ENCODE measurements at regions of chr22 and their contacts with region 1.

Region 1: DNA sequence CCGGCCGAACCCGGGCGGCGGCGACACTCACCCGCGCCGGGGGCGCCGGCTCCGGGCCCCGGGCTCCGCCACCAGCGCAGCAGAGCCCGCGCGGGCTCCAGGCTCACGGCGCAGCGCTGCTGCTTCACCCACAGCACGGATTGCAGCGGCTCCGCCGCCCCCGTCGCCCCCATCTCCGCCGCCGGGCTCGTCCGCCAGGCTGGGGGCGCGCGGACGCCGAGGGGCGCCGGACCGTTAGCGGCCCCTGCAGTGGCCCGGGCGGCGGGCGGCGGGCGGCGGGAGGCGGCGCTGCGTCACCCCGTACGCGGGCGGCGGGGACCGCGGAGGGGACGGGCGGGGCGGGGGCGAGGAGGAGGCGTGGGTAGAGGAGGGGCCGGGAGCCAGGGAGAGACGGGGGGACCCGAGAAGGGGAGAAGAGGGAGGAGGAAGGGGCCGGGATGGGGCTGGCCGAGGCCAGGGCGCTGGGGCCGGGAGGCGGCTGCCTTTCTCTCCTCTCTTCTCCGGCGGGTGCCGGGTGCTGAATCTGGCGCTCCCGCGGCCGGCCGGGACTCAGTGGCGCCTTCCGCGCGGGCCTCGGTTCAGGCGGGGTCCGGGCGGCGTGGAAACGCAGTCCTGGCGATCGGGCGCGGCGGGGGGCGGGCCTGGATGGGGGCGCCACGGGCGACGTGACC is at the start of gene CERK:
- DNase-seq: peak; percentile 58
- H3K4me3 ChIP-seq: peak within 1 kb of the TSS; percentile 77
- H3K27ac ChIP-seq: peak within 1 kb of the TSS; percentile 56
- H3K4me1 ChIP-seq: peaks cover 46% of the 10 kb centered on the region
- CTCF ChIP-seq: no peak
- total RNA-seq, gene CERK: 47.9 and 48.1 TPM in 2 replicates

Region 2: GRCh38 chr22:46592390-46592872 is 145.7 kb before region 1 on chr22:
- CTCF ChIA-PET with region 1: no interaction called
- POLR2A ChIA-PET with region 1: no interaction called
- intact Hi-C with region 1: loop called (anchors 5 kb)
- DNase-seq: peak; percentile 82
- H3K4me3 ChIP-seq: peak overlapping the region; percentile 49
- H3K27ac ChIP-seq: peak overlapping the region; percentile 87
- H3K4me1 ChIP-seq: peaks cover 65% of the 10 kb centered on the region
- CTCF ChIP-seq: no peak

Region 3: GRCh38 chr22:46613606-46614021 is 124.5 kb before region 1 on chr22:
- CTCF ChIA-PET with region 1: no interaction called
- POLR2A ChIA-PET with region 1: no interaction called
- intact Hi-C with region 1: loop called (anchors 2 kb)
- DNase-seq: peak; percentile 78
- H3K4me3 ChIP-seq: peak overlapping the region; percentile 71
- H3K27ac ChIP-seq: peak overlapping the region; percentile 82
- H3K4me1 ChIP-seq: peaks cover 28% of the 10 kb centered on the region
- CTCF ChIP-seq: no peak

Region 4: GRCh38 chr22:46681010-46681409 is 57.1 kb before region 1 on chr22:
- CTCF ChIA-PET with region 1: no interaction called
- POLR2A ChIA-PET with region 1: no interaction called
- intact Hi-C with region 1: loop called (anchors 5 kb)
- DNase-seq: peak; percentile 40
- H3K4me3 ChIP-seq: no peak overlapping the region
- H3K27ac ChIP-seq: no peak overlapping the region
- H3K4me1 ChIP-seq: peaks cover 32% of the 10 kb centered on the region
- CTCF ChIP-seq: peak; percentile 69

Region 5: DNA sequence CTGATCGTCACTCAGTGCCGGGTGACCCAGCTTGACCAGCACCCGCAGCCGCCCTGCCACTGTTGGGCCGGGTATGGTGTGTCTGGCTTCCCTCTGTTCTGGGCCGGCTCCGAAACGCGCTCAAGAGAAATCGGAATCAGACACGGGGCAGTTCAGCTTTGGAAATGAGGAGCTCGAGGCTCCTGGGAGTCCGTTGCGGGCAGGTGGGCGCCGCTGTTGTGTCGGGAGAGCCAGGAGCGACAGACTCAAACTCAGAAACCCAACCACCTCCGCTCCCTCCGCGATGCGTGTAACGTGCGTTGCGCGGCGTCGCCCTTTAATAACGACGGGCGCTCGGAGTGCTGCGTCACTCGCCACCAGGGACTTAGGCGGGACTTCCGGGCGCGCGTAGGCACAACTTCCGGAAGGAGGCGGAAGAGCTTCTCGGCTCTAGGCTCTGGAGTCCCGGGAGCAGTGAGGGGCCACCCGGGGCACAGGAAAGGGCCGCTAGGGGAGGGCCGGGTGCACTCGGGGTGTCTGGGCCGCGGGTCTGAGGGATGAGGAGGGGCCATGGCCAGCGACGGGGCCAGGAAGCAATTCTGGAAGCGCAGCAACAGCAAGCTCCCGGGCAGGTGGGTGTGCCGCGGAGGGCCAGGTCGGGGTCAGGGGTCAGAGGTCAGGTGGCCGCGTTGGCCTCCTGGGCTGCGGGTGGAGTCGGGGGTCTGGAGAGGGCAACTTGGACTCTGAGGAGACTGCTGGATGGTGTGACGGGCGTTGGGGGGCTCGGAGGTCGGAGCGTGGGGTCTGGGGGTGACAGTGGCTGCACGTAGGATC is 24.3 kb after region 1 on chr22 and contains the start of gene TBC1D22A:
- CTCF ChIA-PET with region 1: no interaction called
- POLR2A ChIA-PET with region 1: interaction called, 7 read pairs
- intact Hi-C with region 1: loop called (anchors 2 kb)
- DNase-seq: peak; percentile 96
- H3K4me3 ChIP-seq: peak within 1 kb of the TSS; percentile 93
- H3K27ac ChIP-seq: peak within 1 kb of the TSS; percentile 70
- H3K4me1 ChIP-seq: peaks cover 43% of the 10 kb centered on the region
- CTCF ChIP-seq: no peak
- total RNA-seq, gene TBC1D22A: 15.0 and 22.3 TPM in 2 replicates

Region 6: DNA sequence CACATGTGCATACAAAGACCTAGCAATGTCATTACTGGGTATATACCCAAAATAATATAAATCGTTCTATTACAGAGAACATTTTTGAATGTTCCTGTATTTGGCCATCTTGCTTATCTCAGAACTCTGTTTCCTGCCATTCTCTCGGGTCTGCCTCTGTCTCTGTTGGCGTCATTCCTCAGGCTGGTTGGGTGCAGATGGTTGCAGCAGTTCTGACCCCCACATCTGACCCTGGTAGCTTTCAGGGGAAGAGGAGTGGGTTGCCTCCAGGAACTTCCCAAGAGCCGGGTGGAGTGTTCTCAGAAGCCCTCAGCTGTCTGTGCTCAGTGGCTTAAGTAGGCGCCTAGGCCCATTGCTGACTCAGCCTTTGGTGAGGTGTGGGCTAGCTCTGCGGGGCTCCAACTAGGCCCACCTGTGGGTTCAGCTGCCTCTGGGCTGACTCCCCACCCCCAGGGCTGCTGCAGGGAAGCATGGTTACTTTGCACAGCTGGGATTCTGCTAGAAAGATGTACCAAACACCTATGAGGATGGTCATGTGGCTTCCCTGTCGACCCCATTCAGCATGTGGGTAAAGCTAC is 138.3 kb after region 1 on chr22:
- CTCF ChIA-PET with region 1: no interaction called
- POLR2A ChIA-PET with region 1: no interaction called
- intact Hi-C with region 1: no loop called
- DNase-seq: no peak
- H3K4me3 ChIP-seq: no peak overlapping the region
- H3K27ac ChIP-seq: no peak overlapping the region
- H3K4me1 ChIP-seq: no peaks in the 10 kb centered on the region
- CTCF ChIP-seq: no peak

Region 7: DNA sequence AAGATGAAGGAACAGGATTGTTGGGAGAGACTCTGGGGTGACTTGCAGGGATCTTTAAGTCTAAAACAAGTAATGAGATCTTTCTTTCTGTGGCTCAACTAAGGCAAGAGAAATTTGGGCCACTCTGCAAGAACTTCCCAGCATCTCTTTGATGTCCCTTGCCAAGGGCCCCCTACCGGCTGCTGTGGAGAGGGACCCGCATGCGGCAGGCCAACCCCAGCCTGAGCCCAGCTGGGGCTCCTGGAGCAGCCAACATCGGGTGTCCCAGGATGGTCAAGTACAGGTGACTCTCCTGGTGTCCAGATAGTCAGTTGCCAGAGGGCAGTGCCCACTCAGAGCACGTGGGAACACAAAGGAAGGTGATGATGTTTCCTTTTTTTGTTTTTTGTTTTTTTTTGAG is 387.5 kb after region 1 on chr22:
- CTCF ChIA-PET with region 1: no interaction called
- POLR2A ChIA-PET with region 1: no interaction called
- intact Hi-C with region 1: no loop called
- DNase-seq: peak; percentile 34
- H3K4me3 ChIP-seq: no peak overlapping the region
- H3K27ac ChIP-seq: no peak overlapping the region
- H3K4me1 ChIP-seq: no peaks in the 10 kb centered on the region
- CTCF ChIP-seq: peak; percentile 61